ENCODE measurements at regions of chr14 and their contacts with region 1.

Region 1: DNA sequence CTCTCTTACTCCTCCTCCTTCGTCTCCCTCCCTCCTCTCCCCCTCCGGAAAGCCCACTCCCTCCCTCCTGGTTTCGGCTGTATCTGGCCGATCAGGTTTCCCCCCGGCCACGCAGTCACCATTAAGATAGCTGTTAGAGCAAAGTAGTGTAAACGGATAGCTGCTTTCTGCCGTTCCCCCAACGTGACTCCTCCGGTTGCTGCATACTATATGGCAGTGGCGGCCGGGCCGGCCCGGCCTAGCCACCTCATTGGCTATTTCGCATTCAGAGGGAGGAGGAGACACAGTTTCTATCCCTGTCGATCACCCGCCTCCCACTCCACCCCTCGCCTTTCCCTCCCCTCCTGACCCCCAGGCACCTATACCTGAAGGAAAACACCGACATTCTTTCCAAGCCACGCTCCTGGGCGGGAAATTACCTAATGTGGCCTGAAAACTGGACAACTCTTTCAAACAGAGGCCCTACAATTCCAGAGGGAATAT is at the start of gene SIX4:
- DNase-seq: peak; percentile 77 to 78
- H3K4me3 ChIP-seq: peak within 1 kb of the TSS; percentile 76 to 99 (median 90)
- H3K27ac ChIP-seq: peak within 1 kb of the TSS; percentile 49
- H3K4me1 ChIP-seq: peaks cover 2 to 7% (median 5%) of the 10 kb centered on the region in 4 experiments; a peak in 6 of 7 replicates
- H3K27me3 ChIP-seq: no peaks in the 10 kb centered on the region
- CTCF ChIP-seq: no peak
- EP300 ChIP-seq: no peak
- POLR2A ChIP-seq: peak in 1 of 2 experiments; percentile 69; a peak in 1 of 3 replicates
- RAD21 ChIP-seq: peak in 1 of 2 experiments; percentile 8; a peak in 2 of 4 replicates
- total RNA-seq, gene SIX4: 37.7 and 38.9 TPM in 2 replicates

Region 2: GRCh38 chr14:60648934-60649874 is 75.0 kb before region 1 on chr14 and contains the start of gene SIX1:
- CTCF ChIA-PET with region 1: interaction called, 11 read pairs
- POLR2A ChIA-PET with region 1: interaction called, 8 read pairs
- DNase-seq: peak in 1 of 2 experiments; percentile 89
- H3K4me3 ChIP-seq: peak within 1 kb of the TSS; percentile 30 to 63 (median 42)
- H3K27ac ChIP-seq: no peak within 1 kb of the TSS
- H3K4me1 ChIP-seq: peaks cover 10 to 41% (median 25%) of the 10 kb centered on the region in 4 experiments
- H3K27me3 ChIP-seq: peaks cover 78 to 98% (median 89%) of the 10 kb centered on the region in 4 experiments
- CTCF ChIP-seq: no peak
- EP300 ChIP-seq: no peak
- POLR2A ChIP-seq: no peak
- RAD21 ChIP-seq: no peak; a peak in 1 of 4 replicates
- total RNA-seq, gene SIX1: 0.46 and 0.69 TPM in 2 replicates

Region 3: DNA sequence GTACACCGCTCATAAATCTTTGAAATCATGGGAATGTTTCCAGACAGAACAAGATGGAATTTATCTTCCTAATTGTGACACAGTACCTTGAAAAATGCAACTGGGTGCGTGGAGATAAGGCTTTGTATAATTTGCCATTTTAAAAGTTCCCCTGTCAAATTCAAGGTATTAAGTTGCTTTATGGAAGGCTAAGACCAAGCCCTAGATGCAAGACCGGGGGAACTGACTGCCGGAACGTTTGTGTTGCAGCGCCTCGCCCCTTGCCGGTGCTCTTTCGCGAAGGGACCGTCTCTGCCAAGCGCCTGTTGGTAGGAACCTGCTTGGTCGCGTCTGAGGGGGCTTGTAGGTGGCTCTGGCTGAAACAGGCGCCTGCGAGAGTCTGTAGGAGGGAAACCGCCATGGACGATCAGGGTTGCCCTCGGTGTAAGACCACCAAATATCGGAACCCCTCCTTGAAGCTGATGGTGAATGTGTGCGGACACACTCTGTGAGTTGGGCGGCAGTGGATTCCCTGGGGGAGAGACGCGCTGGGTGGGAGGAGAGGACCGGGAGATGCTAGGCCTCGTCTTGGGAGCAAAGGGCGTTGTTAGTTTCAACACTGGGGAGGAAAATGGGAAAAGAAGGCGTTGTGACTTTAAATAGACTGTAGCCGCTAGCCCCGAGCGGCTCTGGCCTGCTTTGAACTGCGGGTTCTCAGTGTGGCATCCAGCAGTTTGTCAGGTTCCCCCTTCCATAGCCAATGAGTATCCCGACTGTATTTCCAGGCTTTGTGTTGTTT is 10.5 kb after region 1 on chr14 and contains the start of gene MNAT1:
- CTCF ChIA-PET with region 1: interaction called, 3 read pairs
- POLR2A ChIA-PET with region 1: interaction called, 21 read pairs
- DNase-seq: peak in 1 of 2 experiments; percentile 92
- H3K4me3 ChIP-seq: peak within 1 kb of the TSS; percentile 69 to 99 (median 92)
- H3K27ac ChIP-seq: peak within 1 kb of the TSS; percentile 88
- H3K4me1 ChIP-seq: no peaks in the 10 kb centered on the region; a peak in 3 of 7 replicates
- H3K27me3 ChIP-seq: no peaks in the 10 kb centered on the region
- CTCF ChIP-seq: peak in 1 of 3 experiments; percentile 17; a peak in 1 of 4 replicates
- EP300 ChIP-seq: 0 out of 3 replicates have a peak, but pooled peaks of 1 of the 2 experiments have one; percentile 71
- POLR2A ChIP-seq: peak; percentile 72 to 95
- RAD21 ChIP-seq: peak in 1 of 2 experiments; percentile 43; a peak in 3 of 4 replicates
- total RNA-seq, gene MNAT1: 52.0 and 52.1 TPM in 2 replicates

Measured in H1 (cell line).